H1 (cell line): ENCODE measurements at regions of chr20 and their contacts with region 1.

Region 1: GRCh38 chr20:36754656-36755222 is 8.8 kb upstream of the NDRG3 start:
- DNase-seq: peak in 1 of 2 experiments; percentile 60
- H3K4me3 ChIP-seq: no peak overlapping the region
- H3K27ac ChIP-seq: no peak overlapping the region; the same call in 1 of the 2 replicates
- H3K4me1 ChIP-seq: no peaks in the 10 kb centered on the region
- H3K27me3 ChIP-seq: no peaks in the 10 kb centered on the region
- CTCF ChIP-seq: peak in 2 of 3 experiments; percentile 79; a peak in 3 of 4 replicates
- EP300 ChIP-seq: no peak
- POLR2A ChIP-seq: no peak
- RAD21 ChIP-seq: peak; percentile 82

Region 2: GRCh38 chr20:36613974-36614373 is 140.8 kb before region 1 on chr20:
- CTCF ChIA-PET with region 1: interaction called, 23 read pairs
- POLR2A ChIA-PET with region 1: no interaction called
- DNase-seq: no peak
- H3K4me3 ChIP-seq: no peak overlapping the region
- H3K27ac ChIP-seq: no peak overlapping the region
- H3K4me1 ChIP-seq: no peaks in the 10 kb centered on the region
- H3K27me3 ChIP-seq: no peaks in the 10 kb centered on the region
- CTCF ChIP-seq: no peak
- EP300 ChIP-seq: no peak
- POLR2A ChIP-seq: no peak
- RAD21 ChIP-seq: no peak

Region 3: GRCh38 chr20:36645998-36646397 is 108.7 kb before region 1 on chr20 and contains the start of gene SLA2:
- CTCF ChIA-PET with region 1: interaction called, 13 read pairs
- POLR2A ChIA-PET with region 1: no interaction called
- DNase-seq: no peak
- H3K4me3 ChIP-seq: no peak within 1 kb of the TSS
- H3K27ac ChIP-seq: no peak within 1 kb of the TSS
- H3K4me1 ChIP-seq: peaks cover 1 to 13% (median 6%) of the 10 kb centered on the region in 4 experiments; a peak in 4 of 7 replicates
- H3K27me3 ChIP-seq: no peaks in the 10 kb centered on the region
- CTCF ChIP-seq: no peak
- EP300 ChIP-seq: no peak
- POLR2A ChIP-seq: no peak
- RAD21 ChIP-seq: no peak
- total RNA-seq, gene SLA2: 0.19 TPM in 1 of 2 replicates, not detected in the other

Region 4: DNA sequence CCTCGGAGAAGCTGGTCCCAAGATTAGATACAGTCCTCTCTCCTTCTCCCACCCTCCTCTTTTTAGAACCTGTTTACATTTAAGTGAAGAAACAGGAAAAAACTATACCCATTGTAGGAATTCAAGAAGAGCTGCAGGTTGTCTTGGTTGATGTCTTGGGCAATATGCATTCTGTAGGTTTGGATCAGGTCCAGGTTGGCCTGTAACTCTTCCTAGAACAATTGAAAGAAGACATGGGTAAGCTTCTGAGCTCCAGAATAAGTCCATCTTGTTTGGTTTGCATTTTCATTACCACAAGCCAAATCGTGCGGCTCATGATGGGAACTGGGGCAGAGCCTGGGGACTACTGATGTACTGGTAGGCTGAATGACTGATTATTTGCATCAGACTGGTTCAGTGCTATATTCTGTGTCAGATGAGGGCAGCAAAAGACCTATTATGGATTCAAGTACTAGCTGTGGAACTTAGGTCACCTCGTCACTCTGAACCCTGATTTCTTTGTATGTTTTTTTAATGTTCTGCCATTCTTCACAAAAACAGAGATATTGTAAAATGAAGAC is 88.5 kb before region 1 on chr20:
- CTCF ChIA-PET with region 1: interaction called, 16 read pairs
- POLR2A ChIA-PET with region 1: no interaction called
- DNase-seq: no peak
- H3K4me3 ChIP-seq: no peak overlapping the region
- H3K27ac ChIP-seq: no peak overlapping the region
- H3K4me1 ChIP-seq: no peaks in the 10 kb centered on the region
- H3K27me3 ChIP-seq: no peaks in the 10 kb centered on the region
- CTCF ChIP-seq: peak in 1 of 3 experiments; percentile 5; a peak in 1 of 4 replicates
- EP300 ChIP-seq: no peak
- POLR2A ChIP-seq: no peak
- RAD21 ChIP-seq: peak; percentile 37 to 41

Region 5: DNA sequence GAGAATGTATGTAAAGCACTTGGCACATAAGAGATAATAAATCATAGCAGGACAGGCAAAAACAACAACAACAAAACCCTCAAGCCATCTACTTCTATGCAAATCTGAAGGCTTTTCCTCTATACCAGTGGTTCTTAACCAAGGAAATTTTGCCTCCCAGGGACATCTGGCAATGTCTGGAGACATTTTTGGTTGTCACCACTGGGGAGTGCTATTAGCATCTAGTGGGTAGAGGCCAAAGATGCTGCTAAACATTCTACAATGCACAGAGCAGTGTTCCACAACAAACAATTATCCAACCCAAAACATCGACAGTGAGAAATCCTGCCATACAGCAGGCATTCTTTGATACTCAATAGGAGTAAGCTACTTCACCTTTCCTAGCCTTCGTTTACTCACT is 37.1 kb before region 1 on chr20:
- CTCF ChIA-PET with region 1: interaction called, 19 read pairs
- POLR2A ChIA-PET with region 1: no interaction called
- DNase-seq: no peak
- H3K4me3 ChIP-seq: no peak overlapping the region
- H3K27ac ChIP-seq: no peak overlapping the region
- H3K4me1 ChIP-seq: no peaks in the 10 kb centered on the region
- H3K27me3 ChIP-seq: no peaks in the 10 kb centered on the region
- CTCF ChIP-seq: peak in 2 of 3 experiments; percentile 58 to 60; a peak in 3 of 4 replicates
- EP300 ChIP-seq: no peak
- POLR2A ChIP-seq: no peak
- RAD21 ChIP-seq: peak; percentile 59 to 67

Region 6: GRCh38 chr20:36773597-36774390 is 19.1 kb after region 1 on chr20 and contains the start of gene DSN1:
- CTCF ChIA-PET with region 1: interaction called, 28 read pairs
- POLR2A ChIA-PET with region 1: no interaction called
- DNase-seq: peak; percentile 97 to 100
- H3K4me3 ChIP-seq: peak within 1 kb of the TSS; percentile 64 to 93 (median 85)
- H3K27ac ChIP-seq: peak within 1 kb of the TSS; percentile 89
- H3K4me1 ChIP-seq: peaks cover 0 to 7% (median 1%) of the 10 kb centered on the region in 4 experiments; a peak in 3 of 7 replicates
- H3K27me3 ChIP-seq: no peaks in the 10 kb centered on the region
- CTCF ChIP-seq: peak in 1 of 3 experiments; percentile 88; a peak in 1 of 4 replicates
- EP300 ChIP-seq: no peak
- POLR2A ChIP-seq: peak; percentile 59 to 87
- RAD21 ChIP-seq: no peak; a peak in 2 of 4 replicates
- total RNA-seq, gene DSN1: 24.8 and 26.2 TPM in 2 replicates